HEK293 (cell line): ENCODE measurements at regions of chr1 and their contacts with region 1.

Region 1: GRCh38 chr1:45339789-45340570 is at the starts of genes MUTYH and TOE1:
- H3K4me3 ChIP-seq: peak within 1 kb of the TSS; percentile 67
- H3K27ac ChIP-seq: peak within 1 kb of the TSS; percentile 75
- H3K4me1 ChIP-seq: no peaks in the 10 kb centered on the region
- CTCF ChIP-seq: no peak

Region 2: DNA sequence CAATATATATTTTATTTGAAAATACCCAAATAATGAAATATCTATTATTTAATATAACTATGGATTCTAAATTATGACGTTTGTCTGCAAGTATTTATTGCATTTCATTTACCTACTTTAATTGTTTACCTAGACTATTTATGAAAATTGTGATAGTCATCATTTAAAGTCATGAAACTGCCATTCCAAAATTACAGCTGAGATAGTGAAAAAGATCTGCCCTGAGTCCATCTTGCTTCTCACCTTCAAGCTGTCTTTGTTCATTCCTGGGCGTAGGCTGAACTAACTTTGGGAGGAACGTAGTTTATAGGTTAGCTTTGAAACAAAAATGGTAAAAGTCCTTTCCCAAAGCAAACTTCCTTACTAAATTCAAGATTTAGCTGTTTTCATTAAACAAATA is 25.7 kb before region 1 on chr1:
- CTCF ChIA-PET with region 1: no interaction called
- POLR2A ChIA-PET with region 1: interaction called, 11 read pairs
- H3K4me3 ChIP-seq: no peak overlapping the region
- H3K27ac ChIP-seq: no peak overlapping the region
- H3K4me1 ChIP-seq: no peaks in the 10 kb centered on the region
- CTCF ChIP-seq: no peak

Region 3: GRCh38 chr1:45326627-45327623 is 13.1 kb before region 1 on chr1 and contains the start of gene HPDL:
- CTCF ChIA-PET with region 1: interaction called, 6 read pairs
- POLR2A ChIA-PET with region 1: interaction called, 51 read pairs
- H3K4me3 ChIP-seq: no peak within 1 kb of the TSS; the same call in 1 of the 2 replicates
- H3K27ac ChIP-seq: no peak within 1 kb of the TSS; the same call in 1 of the 2 replicates
- H3K4me1 ChIP-seq: 0 out of 2 replicates have a peak, but pooled peaks cover 3% of the 10 kb centered on the region
- CTCF ChIP-seq: no peak

Region 4: GRCh38 chr1:45359882-45360513 is 20.0 kb after region 1 on chr1:
- CTCF ChIA-PET with region 1: interaction called, 4 read pairs
- POLR2A ChIA-PET with region 1: interaction called, 14 read pairs
- H3K4me3 ChIP-seq: no peak overlapping the region
- H3K27ac ChIP-seq: no peak overlapping the region
- H3K4me1 ChIP-seq: peaks cover 7% of the 10 kb centered on the region; the same call in 1 of the 2 replicates
- CTCF ChIP-seq: no peak

Region 5: DNA sequence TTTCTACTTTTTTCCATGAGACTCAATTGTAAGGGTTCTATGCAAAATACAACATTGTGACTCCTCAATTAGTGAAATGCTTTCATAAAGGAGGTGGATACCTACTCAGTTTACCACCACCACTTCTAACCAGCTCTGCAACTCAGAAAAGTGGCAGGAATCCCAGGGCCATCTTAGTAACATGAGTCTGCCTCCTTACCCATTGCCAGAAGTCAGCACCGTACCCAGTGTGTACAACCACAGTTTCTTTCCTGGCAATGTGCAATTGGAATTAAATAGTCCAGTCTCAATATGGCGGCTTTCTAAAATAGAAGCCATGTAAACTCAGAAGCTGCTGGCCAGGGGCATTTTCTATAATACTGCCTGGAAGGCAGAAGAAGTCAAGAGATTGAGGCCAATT is 118.9 kb after region 1 on chr1:
- CTCF ChIA-PET with region 1: no interaction called
- POLR2A ChIA-PET with region 1: no interaction called
- H3K4me3 ChIP-seq: no peak overlapping the region
- H3K27ac ChIP-seq: no peak overlapping the region
- H3K4me1 ChIP-seq: no peaks in the 10 kb centered on the region
- CTCF ChIP-seq: no peak

Region 6: DNA sequence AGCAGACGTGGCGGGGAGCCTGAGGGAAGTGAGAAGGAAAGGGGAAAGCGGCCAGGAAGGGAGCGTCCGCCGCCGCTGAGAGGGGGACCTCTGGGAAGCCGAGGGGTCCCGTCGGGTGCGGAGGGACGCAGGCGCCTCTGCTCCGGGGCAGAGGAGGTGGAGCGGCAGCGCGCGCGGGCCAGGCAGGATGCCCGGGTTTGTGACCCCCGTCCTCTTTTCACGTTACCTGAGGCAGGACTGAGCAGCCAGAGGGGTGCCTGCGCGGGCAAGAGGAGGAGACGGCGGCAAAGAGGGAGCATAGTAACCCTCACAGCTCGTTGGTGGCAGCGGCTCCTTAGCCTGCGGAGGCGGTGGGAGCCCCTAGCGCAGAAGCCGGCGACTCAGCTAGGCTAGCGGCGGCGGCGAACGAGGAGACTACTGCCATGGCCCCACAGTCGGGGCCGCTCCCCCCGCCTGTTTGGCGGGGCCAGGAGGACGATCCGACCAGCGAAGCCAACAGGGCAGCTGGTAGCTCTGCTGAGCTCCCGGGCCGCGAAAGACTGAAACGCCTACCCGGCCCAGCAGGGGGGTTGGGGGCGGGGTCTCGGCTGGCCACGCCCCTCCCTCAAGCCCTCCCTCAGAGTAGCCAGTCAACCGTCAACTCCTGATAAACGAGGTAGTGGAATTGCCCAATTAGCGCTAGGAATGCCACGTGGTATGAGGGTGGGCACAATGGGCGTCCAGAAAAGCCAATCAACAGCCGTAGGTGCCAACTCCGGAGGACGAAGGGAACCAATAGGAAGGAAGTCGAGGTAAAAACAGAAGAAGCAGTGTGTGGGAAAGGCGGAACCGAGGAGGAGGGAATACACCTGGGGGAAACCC is 150.9 kb after region 1 on chr1 and contains the start of gene TESK2:
- CTCF ChIA-PET with region 1: interaction called, 5 read pairs
- POLR2A ChIA-PET with region 1: interaction called, 32 read pairs
- H3K4me3 ChIP-seq: peak within 1 kb of the TSS; percentile 92
- H3K27ac ChIP-seq: peak within 1 kb of the TSS; percentile 66; the same call in 1 of the 2 replicates
- H3K4me1 ChIP-seq: no peaks in the 10 kb centered on the region
- CTCF ChIP-seq: peak; percentile 25; the same call in 1 of the 2 replicates

Region 7: GRCh38 chr1:45499415-45499769 is 159.4 kb after region 1 on chr1:
- CTCF ChIA-PET with region 1: no interaction called
- POLR2A ChIA-PET with region 1: interaction called, 23 read pairs
- H3K4me3 ChIP-seq: peak overlapping the region; percentile 56
- H3K27ac ChIP-seq: no peak overlapping the region; the same call in 1 of the 2 replicates
- H3K4me1 ChIP-seq: no peaks in the 10 kb centered on the region
- CTCF ChIP-seq: no peak

Region 8: DNA sequence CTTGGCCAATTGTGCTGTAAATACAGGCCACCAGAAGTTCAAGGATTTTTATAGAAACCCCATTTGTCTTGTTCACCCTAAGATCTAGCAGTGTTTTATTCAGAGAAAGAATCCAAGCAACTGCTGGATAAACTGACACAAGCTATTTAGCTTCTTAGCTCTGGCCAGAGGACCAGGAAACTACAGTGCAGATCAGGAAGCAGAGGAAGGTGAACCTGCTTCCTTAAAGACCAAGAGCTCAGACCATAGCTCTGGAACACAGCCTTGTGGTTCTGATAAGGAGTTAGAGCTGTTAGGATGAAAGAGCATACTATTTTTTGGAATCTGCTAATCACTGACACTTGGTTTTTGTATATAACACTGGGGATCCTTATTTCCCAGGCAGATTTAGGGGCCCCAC is 289.1 kb after region 1 on chr1:
- CTCF ChIA-PET with region 1: no interaction called
- POLR2A ChIA-PET with region 1: no interaction called
- H3K4me3 ChIP-seq: no peak overlapping the region
- H3K27ac ChIP-seq: no peak overlapping the region
- H3K4me1 ChIP-seq: no peaks in the 10 kb centered on the region
- CTCF ChIP-seq: no peak